T-cell (primary cell): ENCODE measurements at regions of chr17 and their contacts with region 1.

Region 1: GRCh38 chr17:46212634-46213435 is 19.6 kb upstream of the KANSL1 start:
- DNase-seq: peak in 33 of 35 experiments; percentile 25 to 89 (median 56)
- ATAC-seq: peak; percentile 82 to 93 (median 86)
- H3K4me3 ChIP-seq: no peak overlapping the region
- H3K4me3 Mint-ChIP-seq: no peak overlapping the region
- H3K27ac ChIP-seq: no peak overlapping the region
- H3K27ac Mint-ChIP-seq: peak overlapping the region; percentile 55 to 56
- H3K4me1 ChIP-seq: peaks cover 2 to 3% of the 10 kb centered on the region in 2 experiments
- H3K4me1 Mint-ChIP-seq: peaks cover 28 to 55% (median 35%) of the 10 kb centered on the region in 3 donors
- H3K27me3 ChIP-seq: no peaks in the 10 kb centered on the region
- H3K27me3 Mint-ChIP-seq: no peaks in the 10 kb centered on the region

Region 2: DNA sequence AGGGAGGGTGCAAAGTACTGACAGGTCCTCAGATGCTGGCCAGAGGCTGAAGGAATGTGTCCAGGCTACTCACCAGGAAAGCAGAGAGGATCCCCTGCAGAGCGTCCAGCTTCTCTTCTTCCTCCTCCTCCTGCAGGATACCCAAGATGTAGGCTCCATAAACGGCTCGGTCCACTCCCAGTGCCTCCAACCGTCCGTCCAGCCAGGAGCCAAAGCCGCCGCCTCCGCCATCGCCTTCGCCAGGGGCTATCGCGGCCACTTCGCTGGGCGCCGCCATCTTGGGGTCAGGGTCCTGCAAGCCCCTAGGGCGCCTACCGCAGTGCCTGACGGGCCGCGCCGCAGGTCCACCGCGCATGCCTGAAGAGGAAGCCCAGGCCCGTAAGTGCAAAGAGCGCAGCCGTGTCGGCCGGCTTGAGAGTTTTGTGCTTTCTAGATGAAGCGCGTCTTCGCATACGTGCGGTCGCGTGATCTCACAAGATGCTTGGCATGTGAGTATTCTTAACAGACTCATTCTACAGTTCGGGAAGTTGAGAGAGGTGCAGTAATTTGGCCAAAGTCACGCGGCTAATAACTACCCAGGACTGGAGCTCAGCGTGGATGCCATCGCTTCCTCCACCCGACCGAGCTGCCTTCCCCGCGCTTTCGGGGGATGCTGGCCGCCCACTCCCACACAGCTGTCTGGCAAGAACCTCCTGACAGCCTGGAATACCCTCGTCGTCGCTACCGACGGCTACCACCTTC is 1523.2 kb before region 1 on chr17 and contains the start of gene CCDC43:
- CTCF ChIA-PET with region 1: no interaction called
- POLR2A ChIA-PET with region 1: interaction called in 1 of 2 experiments, 10 read pairs
- DNase-seq: peak; percentile 86 to 95 (median 91)
- ATAC-seq: peak; percentile 98 to 100 (median 99)
- H3K4me3 ChIP-seq: peak within 1 kb of the TSS; percentile 95 to 96
- H3K4me3 Mint-ChIP-seq: peak within 1 kb of the TSS; percentile 97 to 99 (median 98)
- H3K27ac ChIP-seq: peak within 1 kb of the TSS; percentile 81
- H3K27ac Mint-ChIP-seq: peak within 1 kb of the TSS; percentile 96 to 98
- H3K4me1 ChIP-seq: peaks cover 13 to 26% of the 10 kb centered on the region in 2 experiments
- H3K4me1 Mint-ChIP-seq: peaks cover 34 to 44% (median 36%) of the 10 kb centered on the region in 3 donors
- H3K27me3 ChIP-seq: no peaks in the 10 kb centered on the region
- H3K27me3 Mint-ChIP-seq: no peaks in the 10 kb centered on the region
- total RNA-seq, gene CCDC43: 15.1 to 20.4 (median 16.9) TPM

Region 3: GRCh38 chr17:46002311-46002972 is 210.4 kb before region 1 on chr17:
- CTCF ChIA-PET with region 1: interaction called, 8 to 11 read pairs
- POLR2A ChIA-PET with region 1: no interaction called
- DNase-seq: peak; percentile 29 to 84 (median 67)
- ATAC-seq: peak; percentile 90 to 96 (median 92)
- H3K4me3 ChIP-seq: no peak overlapping the region
- H3K4me3 Mint-ChIP-seq: no peak overlapping the region
- H3K27ac ChIP-seq: no peak overlapping the region
- H3K27ac Mint-ChIP-seq: peak overlapping the region in 1 of 2 donors; percentile 27
- H3K4me1 ChIP-seq: peaks cover 0 to 6% of the 10 kb centered on the region in 2 experiments
- H3K4me1 Mint-ChIP-seq: peaks cover 0 to 1% (median 0%) of the 10 kb centered on the region in 3 donors
- H3K27me3 ChIP-seq: peaks cover 0 to 9% of the 10 kb centered on the region in 2 experiments
- H3K27me3 Mint-ChIP-seq: no peaks in the 10 kb centered on the region

Region 4: DNA sequence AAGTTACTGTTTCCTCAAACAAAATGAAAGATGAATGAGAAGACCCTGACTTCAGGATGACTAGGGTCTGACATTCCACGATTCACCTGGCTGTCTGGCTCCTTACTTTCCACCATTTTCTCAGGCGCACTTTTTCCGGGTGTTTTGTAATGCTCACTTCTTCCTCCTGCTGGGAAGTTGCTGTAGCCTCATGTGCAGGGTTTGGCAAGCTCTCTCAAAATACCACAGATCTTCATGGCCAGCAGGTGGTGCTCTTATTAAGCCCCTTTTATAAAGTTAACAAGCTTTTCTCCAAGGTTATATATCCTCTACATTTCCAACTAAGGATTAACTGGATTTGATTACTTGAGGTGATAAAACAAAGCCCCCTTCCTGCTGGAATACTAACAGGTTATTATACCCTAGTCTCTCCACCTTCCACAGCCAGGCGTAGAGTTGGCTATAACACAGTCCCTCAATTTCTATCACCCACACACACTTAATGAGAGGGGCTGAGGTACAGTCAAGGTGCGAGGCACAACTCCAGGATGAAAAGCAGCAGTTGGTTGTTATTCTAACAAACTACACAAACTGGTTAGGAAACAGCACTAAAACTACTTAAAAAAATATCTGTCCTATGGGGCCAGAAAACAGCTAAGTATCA is 168.4 kb before region 1 on chr17:
- CTCF ChIA-PET with region 1: interaction called, 3 to 55 read pairs
- POLR2A ChIA-PET with region 1: no interaction called
- DNase-seq: peak in 33 of 35 experiments; percentile 25 to 74 (median 48)
- ATAC-seq: peak; percentile 57 to 79 (median 74)
- H3K4me3 ChIP-seq: no peak overlapping the region
- H3K4me3 Mint-ChIP-seq: no peak overlapping the region
- H3K27ac ChIP-seq: no peak overlapping the region
- H3K27ac Mint-ChIP-seq: peak overlapping the region; percentile 53 to 69
- H3K4me1 ChIP-seq: no peaks in the 10 kb centered on the region
- H3K4me1 Mint-ChIP-seq: peaks cover 17 to 25% (median 23%) of the 10 kb centered on the region in 3 donors
- H3K27me3 ChIP-seq: no peaks in the 10 kb centered on the region
- H3K27me3 Mint-ChIP-seq: no peaks in the 10 kb centered on the region

Region 5: DNA sequence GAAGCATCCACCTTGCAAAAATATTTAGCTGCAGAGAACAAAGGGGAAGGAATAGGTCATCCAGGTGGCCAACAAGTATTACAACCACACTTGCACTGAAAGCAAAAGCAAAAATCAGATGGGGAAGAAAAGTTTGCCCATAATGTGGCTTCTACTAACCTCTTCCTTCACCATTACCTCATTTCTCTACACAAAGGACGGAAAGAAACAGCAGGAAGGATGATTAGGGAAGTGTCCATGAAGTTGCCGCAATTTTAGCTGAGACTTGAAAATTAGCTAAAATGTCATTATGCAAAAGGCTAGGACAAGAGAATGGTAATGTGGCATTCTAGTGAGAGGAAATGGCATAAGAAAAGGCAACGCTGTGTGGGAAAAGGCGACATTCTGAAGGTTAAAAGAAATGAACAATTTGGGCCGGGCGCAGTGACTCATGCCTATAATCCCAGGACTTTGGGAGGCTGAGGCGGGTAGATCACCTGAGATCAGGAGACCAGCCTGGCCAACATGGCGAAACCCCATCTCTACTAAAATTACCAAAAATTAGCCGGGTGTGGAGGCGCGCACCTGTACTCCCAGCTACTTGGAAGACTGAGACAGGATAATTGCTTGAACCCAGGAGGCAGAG is 33.3 kb before region 1 on chr17:
- CTCF ChIA-PET with region 1: interaction called, 10 read pairs
- POLR2A ChIA-PET with region 1: interaction called, 3 to 9 read pairs
- DNase-seq: no peak
- ATAC-seq: peak in 1 of 4 experiments; percentile 56
- H3K4me3 ChIP-seq: no peak overlapping the region
- H3K4me3 Mint-ChIP-seq: peak overlapping the region; percentile 38 to 71 (median 45)
- H3K27ac ChIP-seq: no peak overlapping the region
- H3K27ac Mint-ChIP-seq: peak overlapping the region; percentile 48 to 73
- H3K4me1 ChIP-seq: peaks cover 55 to 66% of the 10 kb centered on the region in 2 experiments
- H3K4me1 Mint-ChIP-seq: peaks cover 91 to 95% (median 94%) of the 10 kb centered on the region in 3 donors
- H3K27me3 ChIP-seq: no peaks in the 10 kb centered on the region
- H3K27me3 Mint-ChIP-seq: no peaks in the 10 kb centered on the region

Region 6: DNA sequence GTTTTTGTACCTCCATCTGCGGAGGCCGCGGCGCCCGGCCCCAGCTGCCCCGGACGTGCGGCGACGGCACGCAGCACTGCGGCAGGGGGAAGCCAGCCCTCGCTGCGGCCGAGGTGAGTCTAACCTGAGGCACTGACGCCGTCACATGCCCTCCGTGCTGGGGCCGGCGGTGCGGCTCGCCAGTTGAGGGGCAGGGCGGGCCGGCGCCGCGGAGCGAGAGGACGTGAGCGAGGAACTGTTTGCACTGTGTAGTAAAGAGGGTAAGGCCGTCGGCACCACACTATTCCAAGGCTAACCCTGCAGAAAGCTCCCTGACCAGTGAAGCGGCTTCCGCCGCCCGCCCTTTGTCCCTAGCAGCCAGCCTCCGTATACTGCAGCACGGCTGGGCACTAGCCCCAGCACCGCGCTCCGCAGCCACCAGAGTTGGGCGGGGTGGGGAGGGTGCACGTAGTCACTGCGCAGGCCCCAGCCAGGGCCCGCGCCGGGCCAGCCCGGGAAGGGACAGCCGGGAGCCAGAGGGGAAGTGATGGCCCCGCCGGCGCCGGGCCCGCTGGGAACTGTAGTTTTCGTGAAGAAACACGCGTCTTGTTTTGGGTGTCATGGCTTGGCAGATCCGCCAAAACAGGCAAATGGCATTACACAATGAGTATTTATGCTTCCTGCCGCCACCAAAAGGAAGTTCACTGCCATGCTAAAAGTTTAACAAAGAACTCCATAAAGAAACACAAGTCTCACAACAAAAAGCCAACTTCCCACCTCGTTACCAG is 19.0 kb before region 1 on chr17:
- CTCF ChIA-PET with region 1: interaction called, 13 to 76 read pairs
- POLR2A ChIA-PET with region 1: interaction called, 5 to 12 read pairs
- DNase-seq: peak; percentile 76 to 99 (median 93)
- ATAC-seq: peak; percentile 72 to 76 (median 76)
- H3K4me3 ChIP-seq: peak overlapping the region; percentile 94 to 96
- H3K4me3 Mint-ChIP-seq: peak overlapping the region; percentile 83 to 96 (median 85)
- H3K27ac ChIP-seq: peak overlapping the region; percentile 100
- H3K27ac Mint-ChIP-seq: peak overlapping the region; percentile 93 to 98
- H3K4me1 ChIP-seq: peaks cover 39 to 58% of the 10 kb centered on the region in 2 experiments
- H3K4me1 Mint-ChIP-seq: peaks cover 58 to 74% (median 66%) of the 10 kb centered on the region in 3 donors
- H3K27me3 ChIP-seq: no peaks in the 10 kb centered on the region
- H3K27me3 Mint-ChIP-seq: no peaks in the 10 kb centered on the region

Region 7: GRCh38 chr17:46199379-46199778 is 13.5 kb before region 1 on chr17:
- CTCF ChIA-PET with region 1: interaction called, 5 to 76 read pairs
- POLR2A ChIA-PET with region 1: interaction called, 4 to 12 read pairs
- DNase-seq: no peak
- ATAC-seq: no peak
- H3K4me3 ChIP-seq: no peak overlapping the region
- H3K4me3 Mint-ChIP-seq: no peak overlapping the region
- H3K27ac ChIP-seq: no peak overlapping the region
- H3K27ac Mint-ChIP-seq: peak overlapping the region; percentile 18 to 34
- H3K4me1 ChIP-seq: peaks cover 35 to 40% of the 10 kb centered on the region in 2 experiments
- H3K4me1 Mint-ChIP-seq: peaks cover 64 to 93% (median 67%) of the 10 kb centered on the region in 3 donors
- H3K27me3 ChIP-seq: no peaks in the 10 kb centered on the region
- H3K27me3 Mint-ChIP-seq: no peaks in the 10 kb centered on the region